AG04450 (cell line): ENCODE measurements at regions of chr6 and their contacts with region 1.

Region 1: GRCh38 chr6:96897383-96898240 is at the start of gene NDUFAF4:
- DNase-seq: peak; percentile 81
- H3K4me3 ChIP-seq: peak within 1 kb of the TSS; percentile 90
- H3K27ac ChIP-seq: peak within 1 kb of the TSS; percentile 80
- H3K27me3 ChIP-seq: no peaks in the 10 kb centered on the region
- CTCF ChIP-seq: peak; percentile 91
- polyA plus RNA-seq, gene NDUFAF4: 23.6 and 32.5 TPM in 2 replicates

Region 2: GRCh38 chr6:96340164-96340563 is 557.4 kb before region 1 on chr6:
- CTCF ChIA-PET with region 1: no interaction called
- POLR2A ChIA-PET with region 1: no interaction called
- DNase-seq: no peak
- H3K4me3 ChIP-seq: no peak overlapping the region
- H3K27ac ChIP-seq: no peak overlapping the region
- H3K27me3 ChIP-seq: no peaks in the 10 kb centered on the region
- CTCF ChIP-seq: no peak

Region 3: GRCh38 chr6:96837081-96837971 is 60.3 kb before region 1 on chr6 and contains the start of gene GPR63:
- CTCF ChIA-PET with region 1: interaction called, 22 read pairs
- POLR2A ChIA-PET with region 1: no interaction called
- DNase-seq: peak; percentile 15
- H3K4me3 ChIP-seq: peak within 1 kb of the TSS; percentile 78
- H3K27ac ChIP-seq: no peak within 1 kb of the TSS
- H3K27me3 ChIP-seq: peaks cover 9% of the 10 kb centered on the region
- CTCF ChIP-seq: no peak
- polyA plus RNA-seq, gene GPR63: 1.4 and 1.6 TPM in 2 replicates

Region 4: DNA sequence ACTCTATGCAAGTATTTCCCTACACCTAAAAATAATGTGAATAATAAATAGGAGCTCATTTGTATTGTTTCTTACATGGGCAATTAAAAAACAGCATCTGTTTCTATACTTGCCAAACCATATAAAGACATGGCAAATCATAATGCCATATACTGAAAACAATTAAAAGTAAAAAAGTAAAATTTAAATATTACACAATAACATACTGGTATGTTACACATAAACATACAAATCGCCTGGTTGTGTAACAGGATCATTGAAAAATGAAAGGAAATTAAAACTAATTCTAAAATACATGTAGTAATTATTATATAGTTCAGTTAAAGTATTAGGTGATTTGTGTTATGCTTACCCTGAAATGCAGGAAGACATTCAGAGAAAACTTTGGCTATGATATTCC is 11.1 kb before region 1 on chr6:
- CTCF ChIA-PET with region 1: interaction called, 43 read pairs
- POLR2A ChIA-PET with region 1: no interaction called
- DNase-seq: no peak
- H3K4me3 ChIP-seq: no peak overlapping the region
- H3K27ac ChIP-seq: no peak overlapping the region
- H3K27me3 ChIP-seq: no peaks in the 10 kb centered on the region
- CTCF ChIP-seq: no peak

Region 5: DNA sequence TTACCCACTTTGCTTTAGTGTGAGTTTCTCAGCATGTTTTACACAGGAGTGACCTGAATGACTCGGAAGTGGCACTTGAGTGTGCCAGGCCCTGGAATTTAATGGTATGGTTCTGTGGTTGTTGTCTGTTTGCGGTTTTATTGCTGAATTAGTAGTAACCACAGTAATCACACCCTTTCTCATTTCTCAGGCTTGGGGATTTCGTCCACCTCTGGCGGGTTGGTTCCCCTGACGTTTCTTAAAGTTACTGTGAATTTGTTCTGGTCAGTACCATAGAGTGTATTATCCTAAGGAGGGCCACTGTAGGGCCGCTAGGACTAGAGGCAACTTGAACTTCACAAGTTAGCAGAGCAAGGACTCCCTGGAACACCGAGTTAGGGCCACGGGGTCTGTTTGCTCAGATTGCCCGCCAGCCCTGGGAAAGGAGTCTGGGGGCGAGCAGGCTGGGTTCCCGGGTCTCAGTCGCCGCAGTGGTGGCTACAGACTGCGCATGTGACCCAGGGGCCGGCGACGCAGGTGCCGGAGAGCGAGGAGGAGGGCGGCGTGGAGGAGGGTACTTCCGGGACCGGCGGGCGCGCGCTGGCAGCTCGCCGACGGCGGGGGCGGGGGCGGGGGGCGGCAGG is 26.4 kb after region 1 on chr6:
- CTCF ChIA-PET with region 1: interaction called, 22 read pairs
- POLR2A ChIA-PET with region 1: no interaction called
- DNase-seq: no peak
- H3K4me3 ChIP-seq: peak overlapping the region; percentile 65
- H3K27ac ChIP-seq: no peak overlapping the region
- H3K27me3 ChIP-seq: peaks cover 39% of the 10 kb centered on the region
- CTCF ChIP-seq: no peak

Region 6: GRCh38 chr6:97059473-97059872 is 161.9 kb after region 1 on chr6:
- CTCF ChIA-PET with region 1: interaction called, 123 read pairs
- POLR2A ChIA-PET with region 1: no interaction called
- DNase-seq: no peak
- H3K4me3 ChIP-seq: no peak overlapping the region
- H3K27ac ChIP-seq: no peak overlapping the region
- H3K27me3 ChIP-seq: no peaks in the 10 kb centered on the region
- CTCF ChIP-seq: peak; percentile 57

Region 7: DNA sequence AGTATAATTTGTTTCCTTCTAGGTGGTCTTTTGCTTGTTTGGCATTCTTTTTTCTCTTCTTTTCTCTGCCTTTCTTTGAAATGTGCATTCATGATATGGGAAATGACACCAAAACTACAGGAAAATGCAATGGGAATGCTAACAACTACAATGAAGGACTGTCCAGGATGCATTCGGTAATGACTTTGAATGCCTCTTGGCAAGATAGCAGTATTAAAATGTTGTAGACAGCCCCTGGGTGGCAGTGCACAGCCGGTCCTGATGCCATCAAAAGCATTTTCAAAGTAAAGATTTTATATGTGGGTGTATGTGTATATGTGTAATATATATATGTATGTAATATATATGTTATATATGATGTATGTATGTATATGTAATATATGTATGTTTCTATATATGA is 604.2 kb after region 1 on chr6:
- CTCF ChIA-PET with region 1: no interaction called
- POLR2A ChIA-PET with region 1: no interaction called
- DNase-seq: no peak
- H3K4me3 ChIP-seq: no peak overlapping the region
- H3K27ac ChIP-seq: no peak overlapping the region
- H3K27me3 ChIP-seq: no peaks in the 10 kb centered on the region
- CTCF ChIP-seq: no peak